ENCODE measurements at regions of chr12 and their contacts with region 1.

Region 1: GRCh38 chr12:55142669-55143565 is 16.7 kb downstream of the OR9K2 start:
- DNase-seq: peak in 1 of 5 donors; percentile 13
- ATAC-seq: no peak
- H3K4me3 ChIP-seq: no peak overlapping the region
- H3K27ac ChIP-seq: no peak overlapping the region
- H3K4me1 ChIP-seq: no peaks in the 10 kb centered on the region
- H3K27me3 ChIP-seq: peaks cover 0 to 5% (median 0%) of the 10 kb centered on the region in 9 donors
- CTCF ChIP-seq: peak; percentile 46 to 77 (median 58)
- POLR2A ChIP-seq: no peak

Region 2: DNA sequence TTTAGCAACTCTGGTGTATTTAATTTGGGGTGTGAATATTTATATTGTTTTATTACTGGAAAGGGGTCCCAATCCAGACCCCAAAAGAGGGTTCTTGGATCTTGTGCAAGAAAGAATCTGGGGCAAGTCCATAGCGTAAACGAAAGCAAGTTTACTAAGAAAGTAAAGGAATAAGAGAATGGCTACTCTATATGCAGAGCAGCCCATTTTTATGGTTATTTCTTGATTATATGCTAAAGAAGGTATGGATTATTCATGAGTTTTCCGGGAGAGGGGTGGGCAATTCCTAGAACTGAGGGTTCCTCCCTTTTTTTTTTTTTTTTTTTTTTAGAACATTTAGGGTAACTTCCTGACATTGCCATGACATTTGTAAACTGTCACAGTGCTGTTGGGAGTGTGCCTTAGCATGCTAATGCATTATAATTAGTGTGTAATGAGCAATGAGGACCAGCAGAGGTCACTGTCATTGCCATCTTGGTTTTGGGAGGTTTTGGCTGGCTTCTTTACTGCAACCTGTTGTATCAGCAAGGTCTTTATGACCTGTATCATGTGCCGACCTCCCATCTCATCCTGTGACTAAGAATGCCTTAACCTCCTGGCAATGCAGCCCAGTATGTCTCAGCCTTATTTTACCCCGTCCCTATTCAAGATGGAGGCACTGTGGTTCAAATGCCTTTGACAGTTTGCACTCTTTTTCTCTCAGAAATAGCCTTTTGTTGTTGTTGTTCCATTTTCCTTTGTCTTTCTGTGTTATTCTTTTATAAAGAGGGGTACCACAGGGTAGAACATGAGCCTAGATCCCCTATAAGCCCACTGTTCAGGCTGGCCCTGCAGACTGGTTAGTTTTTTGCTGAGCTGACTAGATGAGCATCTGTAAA is 419.3 kb before region 1 on chr12:
- intact Hi-C with region 1: no loop called
- DNase-seq: no peak
- ATAC-seq: no peak
- H3K4me3 ChIP-seq: no peak overlapping the region
- H3K27ac ChIP-seq: no peak overlapping the region
- H3K4me1 ChIP-seq: no peaks in the 10 kb centered on the region
- H3K27me3 ChIP-seq: peaks cover 0 to 25% (median 4%) of the 10 kb centered on the region in 9 donors
- CTCF ChIP-seq: peak in 11 of 12 donors; percentile 27 to 51 (median 35)
- POLR2A ChIP-seq: no peak

Region 3: DNA sequence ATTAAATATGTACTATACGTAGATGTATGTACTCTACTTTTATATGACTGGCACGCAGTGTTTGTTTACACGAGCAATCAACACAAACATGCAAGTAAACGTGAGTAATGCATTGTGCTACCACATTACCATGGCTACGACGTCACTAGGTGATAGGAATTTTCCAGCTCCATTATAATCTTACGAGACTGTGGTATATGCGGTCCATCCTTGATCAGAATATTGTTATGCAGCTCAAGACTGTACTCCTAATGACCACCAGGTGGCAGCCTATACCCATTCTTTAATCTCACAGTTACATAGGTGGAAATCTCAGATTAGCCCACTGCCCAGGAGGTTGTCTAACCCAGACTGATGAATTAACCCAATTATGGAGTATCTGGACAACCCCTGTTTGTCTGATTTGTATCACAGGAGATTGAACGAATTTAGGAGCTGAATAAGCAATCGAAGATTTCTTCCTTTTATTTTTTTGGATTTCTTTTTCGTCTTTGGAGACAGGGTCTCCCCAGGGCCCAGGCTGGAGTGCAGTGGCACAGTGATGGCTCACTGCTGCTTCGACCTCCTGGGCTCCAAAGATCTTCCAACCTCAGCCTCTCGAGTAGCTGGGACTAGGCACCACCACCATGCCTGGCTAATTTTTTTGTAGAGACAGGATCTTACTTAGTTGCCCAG is 149.6 kb before region 1 on chr12:
- intact Hi-C with region 1: loop called in 7 of 10 experiments (anchors 5 to 10 kb)
- DNase-seq: peak in 3 of 5 donors; percentile 31 to 42 (median 35)
- ATAC-seq: peak in 3 of 4 donors; percentile 60 to 80 (median 79)
- H3K4me3 ChIP-seq: no peak overlapping the region
- H3K27ac ChIP-seq: no peak overlapping the region
- H3K4me1 ChIP-seq: peaks cover 0 to 27% (median 2%) of the 10 kb centered on the region in 12 donors
- H3K27me3 ChIP-seq: peaks cover 0 to 9% (median 0%) of the 10 kb centered on the region in 9 donors
- CTCF ChIP-seq: peak; percentile 80 to 94 (median 89)
- POLR2A ChIP-seq: no peak

Region 4: GRCh38 chr12:54998958-54999510 is 143.9 kb before region 1 on chr12:
- intact Hi-C with region 1: loop called in 7 of 10 experiments (anchors 5 to 10 kb)
- DNase-seq: no peak
- ATAC-seq: no peak
- H3K4me3 ChIP-seq: no peak overlapping the region
- H3K27ac ChIP-seq: no peak overlapping the region
- H3K4me1 ChIP-seq: peaks cover 0 to 3% (median 0%) of the 10 kb centered on the region in 12 donors
- H3K27me3 ChIP-seq: peaks cover 0 to 25% (median 0%) of the 10 kb centered on the region in 9 donors
- CTCF ChIP-seq: no peak
- POLR2A ChIP-seq: no peak

Region 5: DNA sequence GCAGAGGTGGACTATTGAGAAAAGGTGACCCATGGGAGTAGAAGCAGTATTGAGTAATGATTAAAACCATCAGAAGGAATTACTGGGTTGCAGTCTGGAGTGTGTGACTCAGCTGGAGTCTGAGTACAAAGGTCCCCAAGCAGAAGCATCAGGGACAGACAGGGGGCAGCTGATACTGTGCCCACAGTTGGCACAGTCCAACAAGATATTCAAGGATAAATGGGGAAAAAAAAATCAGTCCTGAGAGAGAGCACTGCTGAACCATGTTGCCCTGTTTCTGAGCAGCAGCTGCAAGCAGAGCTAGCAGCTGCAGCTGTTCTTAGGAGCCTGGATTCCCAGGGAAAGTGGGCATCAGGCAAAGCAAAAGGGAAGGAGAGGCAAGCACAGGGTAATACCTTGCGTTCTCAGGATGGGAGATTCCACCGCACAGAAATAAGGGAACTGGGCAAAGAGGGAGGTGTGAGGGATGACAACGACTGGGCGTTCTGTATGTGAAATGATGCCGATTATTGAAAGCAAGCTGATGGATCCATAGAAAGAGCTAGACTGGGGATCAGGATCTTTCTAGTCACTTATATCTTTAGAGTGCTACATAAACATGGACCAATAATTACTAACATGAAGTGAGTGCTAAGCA is 105.4 kb before region 1 on chr12:
- intact Hi-C with region 1: no loop called
- DNase-seq: no peak
- ATAC-seq: no peak
- H3K4me3 ChIP-seq: no peak overlapping the region
- H3K27ac ChIP-seq: no peak overlapping the region
- H3K4me1 ChIP-seq: peaks cover 0 to 30% (median 0%) of the 10 kb centered on the region in 12 donors
- H3K27me3 ChIP-seq: peaks cover 0 to 26% (median 0%) of the 10 kb centered on the region in 9 donors
- CTCF ChIP-seq: no peak
- POLR2A ChIP-seq: no peak

Region 6: DNA sequence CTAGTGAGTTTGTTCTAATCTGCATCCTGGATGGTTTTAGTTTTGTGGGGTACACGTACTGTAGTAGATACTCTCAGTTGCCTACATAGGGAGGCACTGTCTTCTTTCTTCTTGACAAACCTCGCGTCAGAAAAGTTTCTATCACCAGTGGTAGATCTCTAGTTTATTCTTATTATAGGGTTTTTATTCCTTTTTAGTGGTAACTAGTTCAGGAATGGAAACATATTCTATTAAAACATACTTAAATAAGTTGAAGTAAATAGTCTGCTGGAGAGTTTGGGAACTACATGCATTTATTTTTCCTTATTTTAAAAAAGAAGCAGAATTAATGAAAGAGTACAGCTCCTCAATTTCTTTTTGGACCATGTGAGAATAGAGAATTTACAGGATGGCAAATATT is 50.3 kb before region 1 on chr12:
- intact Hi-C with region 1: no loop called
- DNase-seq: no peak
- ATAC-seq: no peak
- H3K4me3 ChIP-seq: no peak overlapping the region
- H3K27ac ChIP-seq: no peak overlapping the region
- H3K4me1 ChIP-seq: no peaks in the 10 kb centered on the region
- H3K27me3 ChIP-seq: peaks cover 0 to 9% (median 0%) of the 10 kb centered on the region in 9 donors
- CTCF ChIP-seq: peak in 2 of 12 donors; percentile 17 to 32
- POLR2A ChIP-seq: no peak

Measured in heart left ventricle (tissue), 16 donors.